Activated naive CD4-positive, alpha-beta T cell treated with anti-CD3 and anti-CD28 coated beads for 36 hours (primary cell): ENCODE measurements at regions of chr15 and their contacts with region 1.

Region 1: DNA sequence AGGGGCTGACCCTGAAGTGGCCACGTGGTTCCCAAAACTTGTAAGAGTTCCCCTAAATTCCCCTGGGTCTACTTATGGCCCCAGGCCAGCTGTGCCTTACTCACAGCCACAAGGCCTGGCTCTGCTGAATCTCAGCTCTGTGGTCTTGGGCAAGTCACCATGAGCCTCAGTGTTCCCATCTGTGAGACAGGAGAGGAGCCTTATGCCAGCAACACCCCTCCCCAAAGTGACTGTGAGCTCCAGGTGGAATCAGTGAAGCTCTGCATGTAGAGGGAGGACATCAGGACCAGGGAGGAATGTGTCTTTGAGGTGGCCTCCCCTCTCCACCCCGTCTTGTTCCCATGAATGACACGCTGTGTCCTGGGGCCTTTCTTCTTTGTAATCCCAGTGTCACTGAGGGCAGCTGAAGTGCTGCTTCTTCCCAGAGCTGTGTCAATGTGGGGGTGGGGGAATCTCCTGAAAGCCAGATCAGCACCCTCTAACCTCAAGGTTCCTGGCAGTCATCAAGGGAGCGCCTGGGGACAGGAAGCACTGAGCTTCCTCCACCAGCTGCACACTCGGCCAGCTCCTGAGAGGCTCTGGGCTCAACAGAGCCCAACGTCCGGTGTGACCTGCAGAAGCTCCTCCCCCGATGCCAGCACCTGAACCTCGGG is 258.9 kb downstream of the UACA start:
- DNase-seq: peak; percentile 81
- H3K4me3 Mint-ChIP-seq: peak overlapping the region; percentile 27
- H3K27ac Mint-ChIP-seq: peak overlapping the region; percentile 79
- H3K4me1 Mint-ChIP-seq: peaks cover 85% of the 10 kb centered on the region
- H3K27me3 Mint-ChIP-seq: no peaks in the 10 kb centered on the region

Region 2: GRCh38 chr15:70152070-70152480 is 352.4 kb before region 1 on chr15:
- CTCF ChIA-PET with region 1: no interaction called
- intact Hi-C with region 1: no loop called
- DNase-seq: peak; percentile 30
- H3K4me3 Mint-ChIP-seq: no peak overlapping the region
- H3K27ac Mint-ChIP-seq: no peak overlapping the region
- H3K4me1 Mint-ChIP-seq: no peaks in the 10 kb centered on the region
- H3K27me3 Mint-ChIP-seq: peaks cover 3% of the 10 kb centered on the region

Region 3: GRCh38 chr15:70240082-70240481 is 264.3 kb before region 1 on chr15:
- CTCF ChIA-PET with region 1: no interaction called
- intact Hi-C with region 1: loop called (anchors 2 kb)
- DNase-seq: peak; percentile 84
- H3K4me3 Mint-ChIP-seq: no peak overlapping the region
- H3K27ac Mint-ChIP-seq: no peak overlapping the region
- H3K4me1 Mint-ChIP-seq: peaks cover 56% of the 10 kb centered on the region
- H3K27me3 Mint-ChIP-seq: peaks cover 2% of the 10 kb centered on the region

Region 4: GRCh38 chr15:70466895-70467529 is 37.4 kb before region 1 on chr15:
- CTCF ChIA-PET with region 1: interaction called, 10 read pairs
- intact Hi-C with region 1: no loop called
- DNase-seq: peak; percentile 71
- H3K4me3 Mint-ChIP-seq: no peak overlapping the region
- H3K27ac Mint-ChIP-seq: no peak overlapping the region
- H3K4me1 Mint-ChIP-seq: peaks cover 4% of the 10 kb centered on the region
- H3K27me3 Mint-ChIP-seq: no peaks in the 10 kb centered on the region

Region 5: DNA sequence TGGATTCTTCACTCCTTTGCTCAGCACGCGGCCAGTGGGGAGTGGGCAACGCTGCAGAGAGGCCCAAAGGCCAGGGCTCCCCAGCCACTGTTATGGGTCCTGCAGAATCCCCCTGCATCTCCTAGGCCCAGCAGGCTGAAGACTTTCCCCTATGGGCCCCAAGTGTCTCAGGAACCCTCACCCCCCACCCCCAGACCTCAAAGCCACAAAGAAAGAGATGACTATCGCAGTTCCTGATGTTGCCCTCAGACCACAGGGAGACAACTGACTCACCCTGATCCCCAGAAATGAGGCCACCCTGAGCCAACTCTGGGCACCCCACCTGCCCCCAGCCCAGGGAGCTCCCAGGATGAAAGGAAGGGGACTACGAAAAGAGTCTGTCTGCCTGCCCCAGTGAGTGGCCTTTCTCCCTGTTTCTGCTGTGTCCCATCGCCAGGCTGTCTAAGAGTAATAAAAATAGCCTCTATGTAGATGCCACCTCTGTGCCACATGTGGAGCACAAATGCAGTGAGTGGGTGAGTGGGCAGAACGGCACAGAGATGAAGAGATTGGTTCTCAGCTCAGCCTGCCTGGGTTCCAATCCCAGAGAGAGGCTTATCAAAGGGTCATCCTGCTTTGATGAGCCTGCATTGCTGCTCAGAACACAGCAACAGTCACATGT is 24.1 kb before region 1 on chr15:
- CTCF ChIA-PET with region 1: interaction called, 4 read pairs
- intact Hi-C with region 1: loop called (anchors 1 kb)
- DNase-seq: peak; percentile 88
- H3K4me3 Mint-ChIP-seq: no peak overlapping the region
- H3K27ac Mint-ChIP-seq: no peak overlapping the region
- H3K4me1 Mint-ChIP-seq: peaks cover 34% of the 10 kb centered on the region
- H3K27me3 Mint-ChIP-seq: peaks cover 17% of the 10 kb centered on the region

Region 6: DNA sequence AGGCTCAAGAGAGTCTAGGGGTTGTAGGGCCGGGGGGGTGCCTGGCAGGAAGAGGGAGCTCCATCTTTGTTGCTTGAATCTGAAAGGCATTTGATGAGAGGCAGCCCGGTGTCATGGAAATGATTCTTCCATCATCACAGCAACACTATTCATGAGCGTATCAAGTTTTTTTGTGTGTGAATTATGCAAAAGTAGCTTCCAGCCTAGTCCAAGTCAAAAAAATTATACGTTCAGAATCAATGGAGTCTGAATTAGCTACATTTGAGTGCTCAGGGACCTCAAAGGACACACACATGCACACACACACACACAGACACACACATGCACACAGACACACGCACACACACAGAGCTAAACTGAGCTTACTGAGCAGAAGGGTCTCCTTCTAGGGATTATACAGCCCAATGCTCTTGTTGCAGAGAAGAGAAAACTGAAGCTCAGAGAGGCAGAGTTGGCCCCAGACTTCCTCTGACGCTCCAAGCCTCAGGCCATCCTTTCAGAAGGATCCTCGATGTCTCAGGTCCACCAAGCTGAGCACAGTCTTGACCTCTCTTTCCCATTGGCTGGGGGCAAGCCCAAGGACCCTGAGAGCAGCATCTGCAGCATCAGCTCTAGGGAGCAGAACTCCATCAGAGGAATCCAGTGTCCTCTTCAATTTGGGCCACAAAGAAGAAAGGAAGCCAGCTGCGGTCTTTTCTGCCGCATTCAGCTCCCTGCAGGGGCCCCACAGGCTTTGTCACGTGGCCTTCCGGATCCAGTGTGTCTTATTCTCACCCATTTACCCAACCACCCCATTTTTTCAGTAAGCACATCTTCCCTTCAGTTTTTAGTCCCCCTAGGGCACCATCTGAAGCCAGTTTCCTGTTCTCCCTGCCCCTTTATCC is 30.9 kb after region 1 on chr15:
- CTCF ChIA-PET with region 1: interaction called, 14 read pairs
- intact Hi-C with region 1: no loop called
- DNase-seq: peak; percentile 83
- H3K4me3 Mint-ChIP-seq: peak overlapping the region; percentile 89
- H3K27ac Mint-ChIP-seq: peak overlapping the region; percentile 92
- H3K4me1 Mint-ChIP-seq: peaks cover 51% of the 10 kb centered on the region
- H3K27me3 Mint-ChIP-seq: no peaks in the 10 kb centered on the region

Region 7: GRCh38 chr15:70545526-70545925 is 41.1 kb after region 1 on chr15:
- CTCF ChIA-PET with region 1: interaction called, 5 read pairs
- intact Hi-C with region 1: loop called (anchors 2 kb)
- DNase-seq: no peak
- H3K4me3 Mint-ChIP-seq: no peak overlapping the region
- H3K27ac Mint-ChIP-seq: peak overlapping the region; percentile 91
- H3K4me1 Mint-ChIP-seq: peaks cover 60% of the 10 kb centered on the region
- H3K27me3 Mint-ChIP-seq: no peaks in the 10 kb centered on the region

Region 8: DNA sequence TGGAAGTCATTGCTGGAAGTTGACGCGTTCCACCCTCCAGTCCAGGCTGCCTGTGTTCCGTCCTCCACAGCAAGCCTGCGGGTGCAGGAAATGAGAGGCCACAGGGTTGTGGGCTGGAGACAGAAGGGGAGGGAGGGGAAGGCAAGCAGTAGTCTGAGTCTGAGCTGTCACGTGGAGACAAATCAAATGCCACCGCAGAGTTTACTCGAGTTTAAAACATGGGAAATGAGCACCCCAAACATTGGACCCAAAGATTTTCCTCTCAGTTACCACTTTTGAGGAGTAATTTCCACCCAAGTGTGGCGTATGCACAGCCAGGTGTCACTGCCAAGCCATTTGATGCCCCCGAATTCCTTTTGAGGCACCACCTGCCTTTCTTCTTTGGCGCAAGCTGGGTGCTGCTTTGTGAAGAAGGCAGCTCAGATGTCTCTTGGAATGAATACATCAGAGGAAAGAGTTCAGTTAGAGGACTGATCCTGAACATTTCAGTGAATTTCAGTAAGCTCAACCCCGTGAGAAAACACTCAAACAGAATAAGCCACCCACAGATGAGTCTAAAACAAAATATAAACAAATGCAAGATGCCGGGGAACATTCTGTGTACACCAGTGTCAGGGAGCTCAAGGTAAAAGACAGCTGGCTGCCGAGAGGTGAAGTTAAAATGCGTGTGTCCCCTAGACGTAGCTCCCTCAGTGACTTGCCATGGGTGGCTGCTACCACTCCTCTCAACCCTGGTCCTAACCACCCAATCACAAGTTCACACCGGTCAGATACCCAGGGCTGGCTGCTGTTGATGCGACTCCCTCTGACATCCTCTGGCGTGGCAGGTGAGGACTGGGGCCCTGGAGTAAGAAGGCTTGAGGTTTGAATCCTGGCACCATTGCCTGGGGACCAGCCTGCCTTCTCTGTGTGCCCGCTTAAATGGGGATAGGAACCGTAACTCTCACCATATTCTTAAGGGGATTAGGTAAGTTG is 55.1 kb after region 1 on chr15:
- CTCF ChIA-PET with region 1: interaction called, 4 read pairs
- intact Hi-C with region 1: loop called (anchors 2 kb)
- DNase-seq: peak; percentile 92
- H3K4me3 Mint-ChIP-seq: no peak overlapping the region
- H3K27ac Mint-ChIP-seq: no peak overlapping the region
- H3K4me1 Mint-ChIP-seq: peaks cover 12% of the 10 kb centered on the region
- H3K27me3 Mint-ChIP-seq: no peaks in the 10 kb centered on the region